Transverse colon (tissue), 4 donors: ENCODE measurements at regions of chr11 and their contacts with region 1.

Region 1: DNA sequence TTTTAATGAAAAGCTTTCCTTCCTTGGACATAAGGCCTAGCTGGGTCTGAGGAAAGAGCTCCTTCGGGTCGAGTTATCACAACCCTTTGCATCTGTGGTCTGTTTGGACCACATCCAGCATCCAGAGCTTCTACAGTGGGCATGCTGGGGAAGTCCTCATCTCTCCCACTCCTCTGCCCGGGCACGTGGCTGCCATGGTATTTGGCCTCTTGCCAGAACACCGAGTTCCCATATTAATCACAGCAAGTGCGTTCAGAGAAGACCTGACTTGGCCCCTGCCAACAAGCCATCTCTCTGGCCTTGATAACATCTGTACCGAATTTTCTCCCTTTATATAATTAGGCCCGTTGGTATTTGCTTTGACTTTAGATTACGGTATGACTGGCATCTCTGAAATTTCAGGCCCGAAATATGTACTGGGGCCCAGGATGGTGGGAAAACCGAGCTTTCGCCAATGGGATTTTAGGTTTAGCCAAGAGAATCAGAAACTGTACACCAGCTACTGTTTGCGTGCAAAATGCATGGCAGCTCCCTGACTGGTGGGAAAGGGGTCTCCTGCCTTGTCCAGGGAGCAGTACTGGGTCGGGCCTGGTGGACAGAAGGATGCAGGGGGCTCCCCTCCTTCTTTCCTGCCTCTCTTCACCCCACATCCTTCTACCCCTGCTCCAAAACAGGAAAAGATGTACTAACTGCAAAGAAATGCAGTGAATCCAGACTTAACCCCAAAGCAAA is 90.1 kb downstream of the MICAL2 start:
- DNase-seq: peak; percentile 30
- H3K4me3 ChIP-seq: no peak overlapping the region
- H3K27ac ChIP-seq: peak overlapping the region; percentile 36 to 72 (median 56)
- H3K4me1 ChIP-seq: peaks cover 9 to 22% (median 15%) of the 10 kb centered on the region in 4 donors
- H3K27me3 ChIP-seq: no peaks in the 10 kb centered on the region
- CTCF ChIP-seq: no peak
- EP300 ChIP-seq: peak; percentile 34
- POLR2A ChIP-seq: no peak

Region 2: DNA sequence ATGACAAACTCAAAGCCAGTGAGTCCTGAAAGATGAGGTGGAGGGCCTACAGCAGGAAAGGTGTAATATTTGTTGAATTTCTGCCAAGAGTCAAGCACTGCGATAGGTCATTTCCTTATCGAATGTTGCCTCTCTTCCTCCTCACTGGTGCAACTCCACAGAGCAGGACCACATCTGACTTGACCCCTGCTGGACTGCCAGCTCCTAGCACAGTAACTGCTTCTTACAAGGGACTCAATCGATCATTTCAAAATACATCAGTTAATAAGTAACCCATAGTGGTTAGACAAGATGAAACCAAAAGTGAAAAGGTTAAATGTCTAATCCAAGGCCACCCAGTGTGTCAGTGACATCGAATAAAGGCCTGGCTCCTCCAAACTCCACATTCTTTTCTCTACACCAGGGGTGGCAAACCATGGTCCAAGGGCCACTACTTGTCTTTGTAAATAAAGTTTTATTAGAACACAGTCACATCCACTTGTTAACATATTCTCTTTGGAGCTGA is 748.9 kb before region 1 on chr11:
- in situ Hi-C with region 1: no loop called
- intact Hi-C with region 1: loop called (anchors 5 kb)
- DNase-seq: no peak
- H3K4me3 ChIP-seq: no peak overlapping the region
- H3K27ac ChIP-seq: peak overlapping the region in 1 of 4 donors; percentile 61
- H3K4me1 ChIP-seq: no peaks in the 10 kb centered on the region
- H3K27me3 ChIP-seq: no peaks in the 10 kb centered on the region
- CTCF ChIP-seq: no peak
- EP300 ChIP-seq: no peak
- POLR2A ChIP-seq: no peak

Region 3: GRCh38 chr11:12841946-12842630 is 641.6 kb after region 1 on chr11:
- in situ Hi-C with region 1: no loop called
- intact Hi-C with region 1: no loop called
- DNase-seq: no peak
- H3K4me3 ChIP-seq: no peak overlapping the region
- H3K27ac ChIP-seq: peak overlapping the region; percentile 59 to 88 (median 80)
- H3K4me1 ChIP-seq: peaks cover 33 to 71% (median 62%) of the 10 kb centered on the region in 4 donors
- H3K27me3 ChIP-seq: no peaks in the 10 kb centered on the region
- CTCF ChIP-seq: no peak
- EP300 ChIP-seq: no peak
- POLR2A ChIP-seq: no peak